Activated naive CD4-positive, alpha-beta T cell treated with anti-CD3 and anti-CD28 coated beads for 36 hours (primary cell): ENCODE measurements at regions of chr4 and their contacts with region 1.

Region 1: GRCh38 chr4:32417113-32417704 is 1697.0 kb downstream of the PCDH7 start:
- DNase-seq: no peak
- H3K4me3 Mint-ChIP-seq: no peak overlapping the region
- H3K27ac Mint-ChIP-seq: no peak overlapping the region
- H3K4me1 Mint-ChIP-seq: no peaks in the 10 kb centered on the region
- H3K27me3 Mint-ChIP-seq: no peaks in the 10 kb centered on the region

Region 2: DNA sequence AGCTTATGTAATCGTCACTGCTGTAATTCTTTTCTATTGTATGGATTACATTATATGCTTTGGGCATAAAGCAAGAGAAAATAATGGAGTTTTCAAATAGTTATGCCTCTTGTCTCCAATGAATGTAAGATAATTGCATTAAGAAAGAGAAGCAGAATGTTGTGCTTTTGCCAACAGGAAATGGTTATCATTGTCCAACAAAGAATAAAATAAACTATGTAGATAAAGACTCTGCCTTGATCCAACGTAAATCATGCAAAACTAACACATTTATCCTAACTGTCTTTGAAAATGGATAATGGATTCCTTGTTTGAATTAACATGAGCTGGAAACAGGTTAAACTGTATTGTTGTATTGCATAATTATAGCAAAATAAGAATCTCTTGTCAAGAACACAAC is 11.9 kb after region 1 on chr4:
- CTCF ChIA-PET with region 1: no interaction called
- intact Hi-C with region 1: no loop called
- DNase-seq: no peak
- H3K4me3 Mint-ChIP-seq: no peak overlapping the region
- H3K27ac Mint-ChIP-seq: no peak overlapping the region
- H3K4me1 Mint-ChIP-seq: no peaks in the 10 kb centered on the region
- H3K27me3 Mint-ChIP-seq: no peaks in the 10 kb centered on the region

Region 3: GRCh38 chr4:32672359-32672758 is 255.2 kb after region 1 on chr4:
- CTCF ChIA-PET with region 1: no interaction called
- intact Hi-C with region 1: loop called (anchors 10 kb)
- DNase-seq: no peak
- H3K4me3 Mint-ChIP-seq: no peak overlapping the region
- H3K27ac Mint-ChIP-seq: no peak overlapping the region
- H3K4me1 Mint-ChIP-seq: no peaks in the 10 kb centered on the region
- H3K27me3 Mint-ChIP-seq: no peaks in the 10 kb centered on the region